ENCODE measurements at regions of chr17 and their contacts with region 1.

Region 1: DNA sequence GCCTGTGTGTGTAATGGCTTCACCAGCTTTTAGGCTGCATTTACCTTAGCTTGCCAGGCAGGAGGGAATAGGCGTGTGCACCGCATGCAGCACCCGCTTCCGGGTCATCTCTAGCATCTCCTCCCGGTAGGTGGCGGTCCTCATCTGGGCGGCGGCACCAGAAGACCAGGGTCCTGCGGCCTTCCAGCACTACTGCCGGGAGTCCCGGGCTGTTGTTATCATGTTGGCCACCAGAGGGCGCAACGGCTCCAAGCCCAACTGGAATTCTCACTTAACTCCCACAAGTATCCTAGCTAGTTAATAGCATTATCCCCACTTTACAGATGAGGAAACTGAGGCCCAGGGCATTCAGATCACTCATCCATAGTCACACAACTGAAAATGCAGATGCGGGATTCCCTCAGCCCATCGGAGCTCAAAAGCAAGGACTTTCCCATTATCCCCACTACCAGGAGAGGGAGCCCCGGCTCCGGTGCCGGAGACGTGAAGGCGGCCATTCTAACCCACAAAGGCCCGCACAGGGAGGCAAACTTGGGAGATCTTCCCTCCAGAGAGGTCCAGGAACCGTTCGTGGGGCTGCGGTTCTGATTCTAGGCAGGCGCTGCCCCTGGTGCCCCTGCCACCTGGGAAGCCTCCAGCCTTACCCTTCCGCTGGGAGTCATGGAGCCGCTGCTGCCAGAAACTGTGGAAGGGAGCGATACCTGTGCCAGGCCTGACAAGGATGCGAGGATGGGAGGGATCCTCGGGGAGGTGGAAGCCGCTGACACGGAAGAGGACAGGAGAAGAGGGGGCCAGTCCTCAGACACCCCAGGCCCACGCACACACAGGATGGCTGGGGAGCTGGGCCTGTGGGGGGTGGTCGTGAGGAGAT is 23.9 kb downstream of the LGALS9 start:
- DNase-seq: peak; percentile 22 to 74 (median 45)
- ATAC-seq: peak; percentile 75
- H3K4me3 ChIP-seq: no peak overlapping the region
- H3K4me3 Mint-ChIP-seq: peak overlapping the region in 1 of 10 donors; percentile 0
- H3K27ac ChIP-seq: no peak overlapping the region
- H3K27ac Mint-ChIP-seq: peak overlapping the region in 1 of 9 donors; percentile 43
- H3K4me1 ChIP-seq: no peaks in the 10 kb centered on the region
- H3K4me1 Mint-ChIP-seq: peaks cover 3 to 10% (median 8%) of the 10 kb centered on the region in 7 donors
- H3K27me3 ChIP-seq: no peaks in the 10 kb centered on the region
- H3K27me3 Mint-ChIP-seq: peaks cover 0 to 13% (median 0%) of the 10 kb centered on the region in 5 donors

Region 2: GRCh38 chr17:27332485-27333409 is 322.1 kb before region 1 on chr17:
- CTCF ChIA-PET with region 1: no interaction called
- POLR2A ChIA-PET with region 1: no interaction called
- intact Hi-C with region 1: loop called in 1 of 2 experiments (anchors 5 kb)
- DNase-seq: peak; percentile 49 to 90 (median 71)
- ATAC-seq: peak; percentile 94
- H3K4me3 ChIP-seq: peak overlapping the region; percentile 72
- H3K4me3 Mint-ChIP-seq: peak overlapping the region; percentile 75 to 90 (median 86)
- H3K27ac ChIP-seq: peak overlapping the region; percentile 23
- H3K27ac Mint-ChIP-seq: peak overlapping the region in 8 of 9 donors; percentile 43 to 92 (median 80)
- H3K4me1 ChIP-seq: peaks cover 6 to 10% of the 10 kb centered on the region in 2 donors
- H3K4me1 Mint-ChIP-seq: peaks cover 6 to 25% (median 18%) of the 10 kb centered on the region in 7 donors
- H3K27me3 ChIP-seq: no peaks in the 10 kb centered on the region
- H3K27me3 Mint-ChIP-seq: peaks cover 0 to 3% (median 0%) of the 10 kb centered on the region in 5 donors

Region 3: GRCh38 chr17:27353461-27354050 is 301.3 kb before region 1 on chr17:
- CTCF ChIA-PET with region 1: no interaction called
- POLR2A ChIA-PET with region 1: no interaction called
- intact Hi-C with region 1: loop called (anchors 1 to 5 kb)
- DNase-seq: peak; percentile 68 to 95 (median 77)
- ATAC-seq: peak; percentile 96
- H3K4me3 ChIP-seq: peak overlapping the region; percentile 85
- H3K4me3 Mint-ChIP-seq: peak overlapping the region; percentile 30 to 93 (median 78)
- H3K27ac ChIP-seq: peak overlapping the region; percentile 83
- H3K27ac Mint-ChIP-seq: peak overlapping the region; percentile 46 to 94 (median 79)
- H3K4me1 ChIP-seq: peaks cover 3 to 12% of the 10 kb centered on the region in 2 donors
- H3K4me1 Mint-ChIP-seq: peaks cover 12 to 31% (median 21%) of the 10 kb centered on the region in 7 donors
- H3K27me3 ChIP-seq: no peaks in the 10 kb centered on the region
- H3K27me3 Mint-ChIP-seq: no peaks in the 10 kb centered on the region

Region 4: GRCh38 chr17:27760069-27760885 is 105.4 kb after region 1 on chr17:
- CTCF ChIA-PET with region 1: no interaction called
- POLR2A ChIA-PET with region 1: no interaction called
- intact Hi-C with region 1: loop called in 1 of 2 experiments (anchors 1 kb)
- DNase-seq: peak; percentile 28 to 77 (median 59)
- ATAC-seq: peak; percentile 73
- H3K4me3 ChIP-seq: no peak overlapping the region
- H3K4me3 Mint-ChIP-seq: no peak overlapping the region
- H3K27ac ChIP-seq: no peak overlapping the region
- H3K27ac Mint-ChIP-seq: no peak overlapping the region
- H3K4me1 ChIP-seq: no peaks in the 10 kb centered on the region
- H3K4me1 Mint-ChIP-seq: peaks cover 0 to 7% (median 0%) of the 10 kb centered on the region in 7 donors
- H3K27me3 ChIP-seq: no peaks in the 10 kb centered on the region
- H3K27me3 Mint-ChIP-seq: no peaks in the 10 kb centered on the region

Region 5: DNA sequence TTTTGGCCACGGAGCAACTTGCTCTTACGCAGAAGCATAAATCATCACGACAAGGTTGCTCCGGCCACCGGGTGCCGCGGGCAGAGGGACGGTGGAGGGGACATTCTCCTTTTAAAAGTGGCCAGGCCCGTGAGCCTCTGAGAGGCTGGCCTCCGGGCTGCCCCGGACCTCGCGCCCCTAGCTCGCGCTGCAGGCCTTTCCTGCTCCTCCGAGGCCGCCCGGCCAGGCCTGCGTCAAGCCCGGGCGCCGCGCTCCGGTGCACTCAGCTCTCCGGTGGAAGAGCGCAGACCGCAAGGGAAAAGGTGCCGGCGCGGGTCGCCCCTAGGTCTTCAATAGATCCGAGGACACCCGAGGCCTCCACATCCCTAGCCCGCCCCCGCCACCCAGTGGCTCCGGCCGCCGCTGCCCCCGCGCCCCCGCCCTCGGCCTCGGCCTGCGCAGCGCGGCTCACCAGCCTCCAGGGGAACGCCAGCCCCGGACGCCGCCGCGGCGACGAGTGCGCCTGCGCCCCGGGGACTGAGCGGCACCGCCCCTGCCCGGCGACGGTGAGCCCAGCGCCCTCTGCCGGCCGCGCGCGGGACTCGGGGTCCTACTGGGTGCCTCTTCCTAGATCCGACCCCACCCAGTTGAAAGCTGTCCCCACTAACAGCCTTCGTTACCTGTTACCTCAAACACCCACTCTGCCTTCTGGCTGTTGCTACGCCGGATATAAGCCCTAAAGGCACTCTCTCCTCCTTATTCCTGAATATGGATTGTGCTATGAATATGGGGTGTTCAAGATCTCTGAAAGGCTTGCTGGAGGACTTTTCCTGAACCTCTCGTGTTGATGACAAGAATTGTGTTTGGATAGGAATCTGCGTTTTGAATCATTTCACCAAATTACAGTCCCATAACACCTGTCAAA is 238.2 kb after region 1 on chr17 and contains the start of gene LYRM9:
- CTCF ChIA-PET with region 1: no interaction called
- POLR2A ChIA-PET with region 1: no interaction called
- intact Hi-C with region 1: loop called in 1 of 2 experiments (anchors 5 kb)
- DNase-seq: peak; percentile 87 to 99 (median 93)
- ATAC-seq: peak; percentile 100
- H3K4me3 ChIP-seq: peak within 1 kb of the TSS; percentile 80
- H3K4me3 Mint-ChIP-seq: peak within 1 kb of the TSS; percentile 76 to 95 (median 88)
- H3K27ac ChIP-seq: peak within 1 kb of the TSS; percentile 73
- H3K27ac Mint-ChIP-seq: peak within 1 kb of the TSS; percentile 69 to 89 (median 84)
- H3K4me1 ChIP-seq: peaks cover 0 to 13% of the 10 kb centered on the region in 2 donors
- H3K4me1 Mint-ChIP-seq: peaks cover 15 to 29% (median 26%) of the 10 kb centered on the region in 7 donors
- H3K27me3 ChIP-seq: no peaks in the 10 kb centered on the region
- H3K27me3 Mint-ChIP-seq: peaks cover 15 to 45% (median 19%) of the 10 kb centered on the region in 5 donors
- total RNA-seq, gene LYRM9: 4.2 to 24.5 (median 14.0) TPM

Measured in naive thymus-derived CD4-positive, alpha-beta T cell (primary cell).